Activated naive CD4-positive, alpha-beta T cell treated with anti-CD3 and anti-CD28 coated beads for 36 hours (primary cell): ENCODE measurements at regions of chr1 and their contacts with region 1.

Region 1: DNA sequence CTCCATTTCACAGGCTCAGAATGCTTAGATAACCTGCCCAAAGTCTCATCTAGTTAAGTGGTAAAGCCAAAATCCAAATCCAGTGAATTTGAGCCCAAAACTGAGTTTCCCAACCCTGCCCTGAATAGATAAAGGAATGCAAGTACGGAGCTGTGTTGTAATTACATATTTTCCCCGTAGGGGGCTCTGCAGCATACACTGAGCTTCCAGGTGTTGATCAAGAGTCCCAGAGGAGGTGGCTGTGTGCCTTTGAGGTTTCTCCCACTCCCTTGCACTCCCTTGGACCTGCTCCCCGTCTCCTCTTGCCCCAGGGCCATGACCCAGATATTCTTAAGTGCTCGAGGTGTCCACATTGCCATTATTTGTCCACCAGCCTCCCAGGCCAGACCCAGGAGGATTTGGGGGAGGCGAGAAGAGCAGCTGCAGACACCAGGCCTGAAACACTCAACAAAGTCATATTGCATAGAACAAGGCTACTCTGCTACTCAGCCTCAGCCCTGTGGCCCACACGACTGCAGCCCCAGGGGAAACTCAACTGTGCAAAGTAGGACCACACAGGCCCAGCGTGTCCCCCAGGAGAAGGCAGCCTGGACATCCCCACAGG is 18.4 kb upstream of the LY9 start:
- DNase-seq: peak; percentile 75
- H3K4me3 Mint-ChIP-seq: no peak overlapping the region
- H3K27ac Mint-ChIP-seq: no peak overlapping the region
- H3K4me1 Mint-ChIP-seq: peaks cover 56% of the 10 kb centered on the region
- H3K27me3 Mint-ChIP-seq: no peaks in the 10 kb centered on the region

Region 2: GRCh38 chr1:159746666-159747065 is 1030.9 kb before region 1 on chr1:
- CTCF ChIA-PET with region 1: no interaction called
- intact Hi-C with region 1: no loop called
- DNase-seq: no peak
- H3K4me3 Mint-ChIP-seq: no peak overlapping the region
- H3K27ac Mint-ChIP-seq: no peak overlapping the region
- H3K4me1 Mint-ChIP-seq: no peaks in the 10 kb centered on the region
- H3K27me3 Mint-ChIP-seq: peaks cover 5% of the 10 kb centered on the region

Region 3: DNA sequence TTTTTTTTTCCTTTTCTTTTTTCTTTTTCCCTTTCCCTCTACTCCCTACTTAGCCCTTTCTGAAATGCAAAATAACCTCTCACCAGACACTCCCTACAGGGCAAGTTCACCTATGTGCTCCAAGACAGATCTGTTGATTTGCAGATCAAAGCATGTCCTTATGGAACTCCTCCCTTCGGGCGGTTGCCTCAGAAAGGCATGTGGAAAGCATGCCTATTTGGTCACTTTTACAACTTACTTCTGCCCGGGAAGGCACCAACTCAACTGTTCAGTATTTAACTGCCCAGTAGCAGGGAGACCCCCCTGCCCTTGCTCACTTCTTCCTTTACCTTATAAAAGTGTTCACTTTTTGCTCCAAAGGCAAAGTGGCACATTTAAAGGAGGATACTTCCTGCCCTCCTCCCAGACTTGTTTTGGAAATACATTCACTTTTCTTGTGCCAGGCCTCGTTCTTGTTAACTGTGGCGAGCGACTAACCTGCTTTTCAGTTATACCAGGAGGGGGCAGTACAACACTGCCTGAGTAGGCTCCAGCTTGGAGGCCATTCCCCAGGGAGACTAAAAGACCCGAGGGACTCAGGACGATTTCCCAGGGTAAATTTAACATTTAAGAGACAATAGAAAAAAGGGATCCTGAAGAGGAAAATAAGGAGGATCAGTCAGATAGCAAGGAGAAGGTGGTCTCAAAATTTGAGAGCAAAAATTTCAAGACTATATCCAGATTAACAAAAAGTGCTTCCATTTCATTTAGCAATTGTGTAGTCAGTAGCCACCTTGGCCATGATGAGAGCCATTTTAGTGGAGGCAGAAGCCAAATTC is 50.9 kb before region 1 on chr1:
- CTCF ChIA-PET with region 1: interaction called, 65 read pairs
- intact Hi-C with region 1: no loop called
- DNase-seq: peak; percentile 81
- H3K4me3 Mint-ChIP-seq: no peak overlapping the region
- H3K27ac Mint-ChIP-seq: no peak overlapping the region
- H3K4me1 Mint-ChIP-seq: peaks cover 34% of the 10 kb centered on the region
- H3K27me3 Mint-ChIP-seq: no peaks in the 10 kb centered on the region

Region 4: GRCh38 chr1:160806109-160806665 is 28.6 kb after region 1 on chr1:
- CTCF ChIA-PET with region 1: interaction called, 115 read pairs
- intact Hi-C with region 1: loop called (anchors 5 kb)
- DNase-seq: no peak
- H3K4me3 Mint-ChIP-seq: peak overlapping the region; percentile 30
- H3K27ac Mint-ChIP-seq: peak overlapping the region; percentile 78
- H3K4me1 Mint-ChIP-seq: peaks cover 77% of the 10 kb centered on the region
- H3K27me3 Mint-ChIP-seq: no peaks in the 10 kb centered on the region

Region 5: DNA sequence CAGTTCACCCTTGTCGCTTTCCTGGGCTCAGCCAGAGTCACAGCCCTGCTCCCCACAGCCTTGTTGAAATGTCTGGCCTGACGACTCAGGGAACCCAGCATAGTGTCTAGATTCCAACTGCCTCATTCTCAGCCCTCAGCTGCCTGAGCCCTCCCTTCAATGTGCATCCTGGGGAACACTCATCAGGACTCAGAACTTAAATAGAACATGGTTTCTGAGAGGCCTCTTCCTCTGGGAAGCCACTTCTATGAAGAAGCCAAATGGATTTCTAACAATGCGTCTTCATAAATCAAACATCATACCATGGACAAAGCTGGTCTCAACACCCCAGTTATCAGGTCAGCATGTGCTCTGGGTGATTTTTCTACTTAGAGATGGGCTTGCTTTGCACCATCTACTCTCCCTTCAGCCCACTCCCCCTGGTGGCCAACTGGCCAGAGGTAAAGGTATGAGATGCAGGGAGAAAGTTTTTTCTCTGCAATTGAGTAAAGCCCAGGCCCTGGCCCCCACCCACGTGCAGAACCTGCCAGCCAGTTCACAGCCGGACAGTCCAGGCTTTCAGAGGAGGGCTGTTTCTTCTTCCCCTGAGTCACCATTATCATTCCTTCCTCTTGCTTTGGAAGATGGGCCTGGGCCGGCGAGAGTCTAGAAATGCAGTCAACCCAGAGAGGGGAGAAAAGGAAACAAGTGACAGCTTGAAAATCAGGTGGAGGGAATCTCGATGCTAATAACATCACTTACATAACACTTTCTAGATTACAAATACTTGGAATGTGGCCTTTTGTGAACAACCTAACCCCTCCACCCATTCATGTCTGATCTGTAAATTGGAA is 52.9 kb after region 1 on chr1:
- CTCF ChIA-PET with region 1: interaction called, 107 read pairs
- intact Hi-C with region 1: loop called (anchors 1 kb)
- DNase-seq: peak; percentile 91
- H3K4me3 Mint-ChIP-seq: no peak overlapping the region
- H3K27ac Mint-ChIP-seq: peak overlapping the region; percentile 32
- H3K4me1 Mint-ChIP-seq: peaks cover 18% of the 10 kb centered on the region
- H3K27me3 Mint-ChIP-seq: no peaks in the 10 kb centered on the region

Region 6: GRCh38 chr1:160877221-160877620 is 99.6 kb after region 1 on chr1:
- CTCF ChIA-PET with region 1: interaction called, 7 read pairs
- intact Hi-C with region 1: loop called (anchors 2 kb)
- DNase-seq: peak; percentile 14
- H3K4me3 Mint-ChIP-seq: no peak overlapping the region
- H3K27ac Mint-ChIP-seq: no peak overlapping the region
- H3K4me1 Mint-ChIP-seq: peaks cover 16% of the 10 kb centered on the region
- H3K27me3 Mint-ChIP-seq: no peaks in the 10 kb centered on the region